SK-N-SH (cell line): ENCODE measurements at regions of chr3 and their contacts with region 1.

Region 1: GRCh38 chr3:69410250-69410649 is 24.4 kb upstream of the FRMD4B start:
- DNase-seq: peak; percentile 54
- H3K4me3 ChIP-seq: no peak overlapping the region
- H3K27ac ChIP-seq: peak overlapping the region in 1 of 2 experiments; percentile 8; a peak in 1 of 4 replicates
- H3K4me1 ChIP-seq: peaks cover 2 to 8% of the 10 kb centered on the region in 2 experiments; a peak in 3 of 4 replicates
- H3K27me3 ChIP-seq: no peaks in the 10 kb centered on the region
- CTCF ChIP-seq: peak; percentile 82
- EP300 ChIP-seq: no peak
- RAD21 ChIP-seq: peak; percentile 79

Region 2: DNA sequence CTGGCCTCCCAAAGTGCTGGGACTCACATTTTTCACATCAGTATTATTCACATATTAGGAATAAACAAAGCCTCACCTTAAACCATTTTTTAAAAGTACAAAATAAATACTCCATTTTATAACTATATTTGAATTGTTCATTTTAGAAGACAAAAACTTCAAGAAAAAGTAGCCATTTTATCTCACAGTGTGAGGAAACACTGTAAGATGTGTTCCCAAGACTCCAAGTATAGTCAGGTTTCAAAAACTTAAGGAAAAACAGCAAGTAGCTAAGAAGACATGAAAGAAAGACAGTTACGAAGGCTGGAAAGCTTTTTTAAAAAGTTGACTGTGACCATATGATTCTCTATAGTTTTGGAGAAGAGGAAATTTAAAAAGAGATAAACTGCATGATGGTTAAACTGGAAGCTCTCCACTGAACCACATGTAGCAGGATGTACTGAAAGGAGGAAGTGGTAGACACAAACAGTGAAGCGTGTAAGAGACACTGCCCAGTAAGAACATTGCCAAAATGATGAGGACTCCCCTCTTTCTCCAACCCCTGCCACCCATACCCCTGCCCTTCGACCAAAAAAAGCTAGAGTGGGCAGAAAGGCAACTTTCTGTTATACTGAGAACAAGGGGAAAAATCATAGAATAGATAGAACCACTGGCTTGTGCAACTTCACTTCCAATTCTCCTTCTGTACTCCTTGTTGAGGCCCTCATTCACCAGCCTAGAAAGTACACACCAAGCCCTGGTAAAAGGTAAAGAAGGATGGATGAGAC is 351.9 kb before region 1 on chr3:
- CTCF ChIA-PET with region 1: no interaction called
- POLR2A ChIA-PET with region 1: no interaction called
- DNase-seq: no peak
- H3K4me3 ChIP-seq: no peak overlapping the region
- H3K27ac ChIP-seq: no peak overlapping the region
- H3K4me1 ChIP-seq: no peaks in the 10 kb centered on the region
- H3K27me3 ChIP-seq: no peaks in the 10 kb centered on the region
- CTCF ChIP-seq: no peak
- EP300 ChIP-seq: no peak
- RAD21 ChIP-seq: no peak

Region 3: GRCh38 chr3:69364354-69364753 is 45.9 kb before region 1 on chr3:
- CTCF ChIA-PET with region 1: interaction called, 11 read pairs
- POLR2A ChIA-PET with region 1: no interaction called
- DNase-seq: peak; percentile 56
- H3K4me3 ChIP-seq: no peak overlapping the region
- H3K27ac ChIP-seq: peak overlapping the region; percentile 23 to 46; a peak in 3 of 4 replicates
- H3K4me1 ChIP-seq: peaks cover 0 to 5% of the 10 kb centered on the region in 2 experiments; a peak in 2 of 4 replicates
- H3K27me3 ChIP-seq: no peaks in the 10 kb centered on the region
- CTCF ChIP-seq: no peak
- EP300 ChIP-seq: peak in 1 of 2 experiments; percentile 55; a peak in 1 of 4 replicates
- RAD21 ChIP-seq: no peak

Region 4: DNA sequence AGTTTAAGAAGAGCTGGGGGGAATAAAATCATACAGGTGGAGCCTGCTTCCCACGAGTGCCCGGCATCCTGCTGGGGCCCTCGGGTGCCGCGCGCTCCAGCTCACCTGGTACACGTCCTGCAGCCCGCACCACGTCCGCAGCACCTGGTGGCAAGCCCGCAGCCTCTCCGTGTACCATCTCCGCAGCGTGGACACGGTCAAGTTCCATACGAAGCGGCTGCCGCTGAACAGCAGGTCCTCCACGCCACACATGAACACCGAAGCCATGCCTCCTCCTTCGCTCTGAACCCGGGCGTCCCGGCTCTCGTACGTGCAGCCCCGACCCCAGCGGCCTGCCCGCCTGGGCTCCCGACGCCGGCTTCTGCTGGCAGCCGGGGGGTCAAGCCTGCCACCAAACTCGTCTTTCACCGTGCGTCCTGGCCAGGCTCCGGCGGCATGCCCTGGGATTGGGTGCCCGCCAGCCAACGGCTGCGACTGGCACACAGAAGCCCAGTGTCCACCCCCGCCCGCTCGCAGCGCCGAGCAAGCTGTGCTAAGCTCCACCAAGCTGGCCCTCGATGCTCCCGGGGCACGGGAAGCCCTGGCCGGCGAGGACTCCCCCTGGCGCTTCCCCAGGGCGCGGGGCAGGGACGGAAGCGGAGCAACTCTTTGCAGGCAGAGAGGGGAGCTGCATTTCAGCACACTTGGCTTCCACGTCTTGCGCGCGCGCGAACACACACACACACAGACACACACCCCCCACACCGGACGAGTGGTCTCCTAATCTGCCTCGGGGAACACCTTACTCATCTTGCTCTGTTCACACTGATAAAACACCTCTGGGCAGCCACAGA is 24.3 kb before region 1 on chr3 and contains the start of gene FRMD4B:
- CTCF ChIA-PET with region 1: interaction called, 22 read pairs
- POLR2A ChIA-PET with region 1: no interaction called
- DNase-seq: peak; percentile 87
- H3K4me3 ChIP-seq: peak within 1 kb of the TSS; percentile 58 to 65
- H3K27ac ChIP-seq: peak within 1 kb of the TSS in 1 of 2 experiments; percentile 24; a peak in 1 of 4 replicates
- H3K4me1 ChIP-seq: peaks cover 0 to 12% of the 10 kb centered on the region in 2 experiments; a peak in 1 of 4 replicates
- H3K27me3 ChIP-seq: no peaks in the 10 kb centered on the region
- CTCF ChIP-seq: peak; percentile 45
- EP300 ChIP-seq: no peak
- RAD21 ChIP-seq: no peak
- polyA plus RNA-seq, gene FRMD4B: 0.53 and 0.91 TPM in 2 replicates

Region 5: GRCh38 chr3:69425261-69425660 is 15.0 kb after region 1 on chr3:
- CTCF ChIA-PET with region 1: interaction called, 35 read pairs
- POLR2A ChIA-PET with region 1: no interaction called
- DNase-seq: peak; percentile 29
- H3K4me3 ChIP-seq: no peak overlapping the region
- H3K27ac ChIP-seq: no peak overlapping the region
- H3K4me1 ChIP-seq: peaks cover 12 to 23% of the 10 kb centered on the region in 2 experiments; a peak in 3 of 4 replicates
- H3K27me3 ChIP-seq: no peaks in the 10 kb centered on the region
- CTCF ChIP-seq: peak; percentile 82
- EP300 ChIP-seq: no peak
- RAD21 ChIP-seq: peak; percentile 81